Heart right ventricle (tissue), 16 donors: ENCODE measurements at regions of chr7 and their contacts with region 1.

Region 1: GRCh38 chr7:154892462-154892861 is 110.5 kb downstream of the PAXIP1 start:
- DNase-seq: no peak
- ATAC-seq: no peak
- H3K4me3 ChIP-seq: no peak overlapping the region
- H3K27ac ChIP-seq: no peak overlapping the region
- H3K4me1 ChIP-seq: no peaks in the 10 kb centered on the region
- H3K27me3 ChIP-seq: peaks cover 0 to 33% (median 24%) of the 10 kb centered on the region in 7 donors
- CTCF ChIP-seq: no peak

Region 2: GRCh38 chr7:155907450-155908200 is 1015.2 kb after region 1 on chr7:
- intact Hi-C with region 1: loop called in 1 of 10 experiments (anchors 10 kb)
- DNase-seq: no peak
- ATAC-seq: no peak
- H3K4me3 ChIP-seq: no peak overlapping the region
- H3K27ac ChIP-seq: no peak overlapping the region
- H3K4me1 ChIP-seq: no peaks in the 10 kb centered on the region
- H3K27me3 ChIP-seq: peaks cover 0 to 3% (median 0%) of the 10 kb centered on the region in 7 donors
- CTCF ChIP-seq: no peak